Left lung (tissue), 14 donors: ENCODE measurements at regions of chr2 and their contacts with region 1.

Region 1: DNA sequence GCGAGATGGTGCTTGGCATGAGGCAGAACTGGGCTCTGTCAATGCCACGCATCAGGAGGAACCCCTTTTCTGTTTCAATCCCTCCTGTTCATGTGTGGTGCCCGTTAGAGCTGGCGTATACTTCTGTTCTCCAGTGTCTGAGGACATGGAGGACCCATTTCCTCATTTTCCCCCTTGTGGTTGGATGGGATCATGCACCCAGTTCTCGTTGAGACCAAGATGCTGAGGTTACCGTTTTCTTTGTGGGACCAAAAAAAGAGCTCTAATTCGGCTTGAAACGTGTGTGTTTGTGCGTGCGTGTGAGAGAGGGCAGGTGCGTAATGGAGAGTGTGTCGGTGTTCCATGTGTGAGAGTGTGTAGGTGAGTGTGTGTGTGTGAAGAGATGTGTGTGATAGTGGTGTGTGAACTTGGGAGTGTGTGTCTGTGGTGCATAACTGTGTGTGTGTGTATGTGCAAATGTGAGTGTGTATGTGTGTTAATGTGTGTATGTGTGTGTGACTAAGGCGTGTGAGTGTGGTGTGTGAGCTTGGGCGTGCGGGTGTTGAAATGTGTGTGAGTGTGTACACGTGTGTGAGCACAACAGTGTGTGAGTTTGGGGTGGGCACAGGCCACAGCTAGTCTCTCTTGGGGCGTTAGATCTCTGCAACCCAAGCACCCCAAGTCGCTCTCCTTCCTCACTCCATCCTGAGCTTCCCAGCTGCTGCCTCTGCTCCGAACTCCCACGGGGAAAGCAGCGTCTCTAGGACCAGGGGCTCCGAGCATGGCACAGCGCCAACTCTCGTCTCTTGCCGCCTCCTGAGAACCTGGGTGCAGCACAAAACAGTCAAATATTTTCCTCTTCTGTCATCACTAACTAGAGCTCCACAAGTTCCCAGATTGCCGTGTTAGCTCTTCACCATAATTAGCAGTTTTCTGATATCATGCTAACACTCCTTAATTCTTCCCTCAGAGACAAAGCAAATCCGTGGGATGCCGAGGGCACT is 75.8 kb downstream of the LONRF2 start:
- DNase-seq: no peak
- ATAC-seq: no peak
- H3K4me3 ChIP-seq: no peak overlapping the region
- H3K27ac ChIP-seq: no peak overlapping the region
- H3K4me1 ChIP-seq: peaks cover 3 to 13% of the 10 kb centered on the region in 2 donors
- H3K27me3 ChIP-seq: no peaks in the 10 kb centered on the region
- CTCF ChIP-seq: peak in 1 of 2 donors; percentile 56

Region 2: GRCh38 chr2:99562516-99562915 is 683.9 kb before region 1 on chr2:
- intact Hi-C with region 1: loop called in 1 of 2 experiments (anchors 5 kb)
- DNase-seq: no peak
- ATAC-seq: no peak
- H3K4me3 ChIP-seq: no peak overlapping the region
- H3K27ac ChIP-seq: no peak overlapping the region
- H3K4me1 ChIP-seq: peaks cover 0 to 4% of the 10 kb centered on the region in 2 donors
- H3K27me3 ChIP-seq: no peaks in the 10 kb centered on the region
- CTCF ChIP-seq: no peak

Region 3: DNA sequence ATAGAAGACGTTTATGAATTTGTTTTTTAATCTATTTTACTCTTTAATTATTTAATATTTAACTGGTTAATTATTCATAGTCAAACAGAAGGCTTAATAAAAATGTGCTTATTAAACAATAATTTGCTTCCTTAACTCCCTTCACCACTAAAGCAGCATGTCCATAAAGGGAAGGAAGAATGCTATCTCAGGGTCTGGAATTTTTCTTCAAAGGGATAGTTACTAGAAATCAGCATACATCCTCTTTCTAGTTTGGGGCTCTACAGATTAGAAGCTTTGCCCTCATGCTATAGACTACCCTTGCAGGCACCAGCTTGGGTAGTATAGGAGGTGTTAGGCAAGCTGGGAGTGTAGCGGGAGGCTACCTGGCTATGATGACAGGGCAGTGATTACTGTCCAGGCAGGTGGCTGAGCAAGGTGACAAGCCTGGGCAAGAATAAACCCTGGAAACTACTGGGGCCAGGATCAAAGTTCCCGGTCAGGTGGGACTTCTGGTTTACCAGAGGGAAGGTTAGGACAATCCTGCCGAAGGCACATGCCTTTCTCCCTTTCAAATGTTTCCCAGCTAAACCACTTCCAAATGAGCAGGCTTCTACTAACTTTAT is 480.6 kb before region 1 on chr2:
- intact Hi-C with region 1: no loop called
- DNase-seq: no peak
- ATAC-seq: no peak
- H3K4me3 ChIP-seq: no peak overlapping the region
- H3K27ac ChIP-seq: no peak overlapping the region
- H3K4me1 ChIP-seq: peaks cover 0 to 14% of the 10 kb centered on the region in 2 donors
- H3K27me3 ChIP-seq: no peaks in the 10 kb centered on the region
- CTCF ChIP-seq: no peak

Region 4: GRCh38 chr2:100043891-100044255 is 202.6 kb before region 1 on chr2:
- intact Hi-C with region 1: no loop called
- DNase-seq: no peak
- ATAC-seq: no peak
- H3K4me3 ChIP-seq: no peak overlapping the region
- H3K27ac ChIP-seq: no peak overlapping the region
- H3K4me1 ChIP-seq: no peaks in the 10 kb centered on the region
- H3K27me3 ChIP-seq: no peaks in the 10 kb centered on the region
- CTCF ChIP-seq: no peak